ENCODE measurements at regions of chr19 and their contacts with region 1.

Region 1: GRCh38 chr19:10478903-10479384 is 24.2 kb downstream of the KEAP1 start:
- DNase-seq: no peak
- H3K4me3 ChIP-seq: peak overlapping the region; percentile 47
- CTCF ChIP-seq: peak; percentile 25

Region 2: GRCh38 chr19:10491472-10492047 is 12.6 kb after region 1 on chr19:
- CTCF ChIA-PET with region 1: interaction called, 53 read pairs
- POLR2A ChIA-PET with region 1: interaction called, 4 read pairs
- DNase-seq: no peak
- H3K4me3 ChIP-seq: no peak overlapping the region
- CTCF ChIP-seq: no peak

Region 3: GRCh38 chr19:10501971-10502523 is 23.1 kb after region 1 on chr19:
- CTCF ChIA-PET with region 1: interaction called, 53 read pairs
- POLR2A ChIA-PET with region 1: interaction called, 4 read pairs
- DNase-seq: no peak
- H3K4me3 ChIP-seq: peak overlapping the region; percentile 86
- CTCF ChIP-seq: no peak

Region 4: GRCh38 chr19:10551698-10552301 is 72.9 kb after region 1 on chr19:
- CTCF ChIA-PET with region 1: interaction called, 21 read pairs
- POLR2A ChIA-PET with region 1: no interaction called
- DNase-seq: no peak
- H3K4me3 ChIP-seq: no peak overlapping the region
- CTCF ChIP-seq: no peak

Region 5: DNA sequence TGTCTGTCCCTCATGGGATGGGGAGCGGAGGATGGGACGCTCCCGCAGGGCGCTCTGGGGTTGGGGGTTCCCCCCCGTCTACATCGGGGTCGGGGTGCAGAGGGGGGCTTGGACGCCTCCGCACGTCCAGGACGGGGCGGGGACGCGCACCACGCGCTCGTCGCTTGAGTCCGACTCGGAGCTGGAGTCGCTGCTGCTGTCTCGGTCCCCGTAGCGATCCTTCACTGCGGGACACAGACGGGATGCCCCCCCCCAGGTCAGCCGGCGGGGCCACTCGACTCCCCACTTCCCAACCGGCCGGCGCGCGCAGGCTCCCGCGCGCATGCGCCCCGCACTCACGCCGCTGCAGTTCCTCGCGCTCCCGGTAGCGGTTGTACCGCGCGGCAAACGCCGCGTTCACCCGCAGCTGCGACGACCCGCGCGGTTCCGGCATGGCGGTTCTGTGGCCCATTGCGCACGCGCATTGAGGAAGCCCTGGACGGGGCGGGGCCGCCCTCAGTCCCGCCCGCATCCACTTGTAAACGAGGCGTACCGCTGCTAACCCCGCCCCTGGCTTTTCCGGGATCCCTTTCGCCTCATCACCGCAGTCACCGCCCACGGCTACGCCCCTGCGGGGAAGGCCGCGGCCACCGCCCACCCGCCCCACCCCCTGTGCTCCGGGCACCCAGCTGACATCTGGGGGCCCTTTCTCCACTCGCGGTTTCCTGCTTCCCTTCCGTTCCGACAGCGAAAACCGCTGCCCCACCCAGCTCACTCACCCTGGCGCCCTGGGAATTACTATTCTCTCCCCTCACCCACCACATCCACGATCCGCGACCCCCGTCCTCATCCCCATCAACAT is 86.8 kb after region 1 on chr19 and contains the start of gene KRI1:
- CTCF ChIA-PET with region 1: interaction called, 37 read pairs
- POLR2A ChIA-PET with region 1: no interaction called
- DNase-seq: peak; percentile 67
- H3K4me3 ChIP-seq: peak within 1 kb of the TSS; percentile 98
- CTCF ChIP-seq: peak; percentile 53

Measured in AG04449 (cell line).